Breast epithelium (tissue), 4 donors: ENCODE measurements at regions of chr17 and their contacts with region 1.

Region 1: GRCh38 chr17:48202959-48203358 is 95.4 kb downstream of the SNX11 start:
- DNase-seq: no peak
- H3K4me3 ChIP-seq: no peak overlapping the region
- H3K27ac ChIP-seq: no peak overlapping the region
- H3K4me1 ChIP-seq: no peaks in the 10 kb centered on the region
- H3K27me3 ChIP-seq: no peaks in the 10 kb centered on the region
- CTCF ChIP-seq: no peak
- POLR2A ChIP-seq: no peak

Region 2: GRCh38 chr17:48392857-48393256 is 189.9 kb after region 1 on chr17:
- intact Hi-C with region 1: no loop called
- DNase-seq: no peak
- H3K4me3 ChIP-seq: no peak overlapping the region
- H3K27ac ChIP-seq: no peak overlapping the region
- H3K4me1 ChIP-seq: no peaks in the 10 kb centered on the region
- H3K27me3 ChIP-seq: peaks cover 0 to 16% of the 10 kb centered on the region in 2 donors
- CTCF ChIP-seq: no peak
- POLR2A ChIP-seq: no peak

Region 3: GRCh38 chr17:49016788-49017463 is 814.0 kb after region 1 on chr17:
- intact Hi-C with region 1: no loop called
- DNase-seq: no peak
- H3K4me3 ChIP-seq: no peak overlapping the region
- H3K27ac ChIP-seq: no peak overlapping the region
- H3K4me1 ChIP-seq: peaks cover 0 to 6% of the 10 kb centered on the region in 2 donors
- H3K27me3 ChIP-seq: peaks cover 5 to 60% of the 10 kb centered on the region in 2 donors
- CTCF ChIP-seq: no peak
- POLR2A ChIP-seq: no peak

Region 4: DNA sequence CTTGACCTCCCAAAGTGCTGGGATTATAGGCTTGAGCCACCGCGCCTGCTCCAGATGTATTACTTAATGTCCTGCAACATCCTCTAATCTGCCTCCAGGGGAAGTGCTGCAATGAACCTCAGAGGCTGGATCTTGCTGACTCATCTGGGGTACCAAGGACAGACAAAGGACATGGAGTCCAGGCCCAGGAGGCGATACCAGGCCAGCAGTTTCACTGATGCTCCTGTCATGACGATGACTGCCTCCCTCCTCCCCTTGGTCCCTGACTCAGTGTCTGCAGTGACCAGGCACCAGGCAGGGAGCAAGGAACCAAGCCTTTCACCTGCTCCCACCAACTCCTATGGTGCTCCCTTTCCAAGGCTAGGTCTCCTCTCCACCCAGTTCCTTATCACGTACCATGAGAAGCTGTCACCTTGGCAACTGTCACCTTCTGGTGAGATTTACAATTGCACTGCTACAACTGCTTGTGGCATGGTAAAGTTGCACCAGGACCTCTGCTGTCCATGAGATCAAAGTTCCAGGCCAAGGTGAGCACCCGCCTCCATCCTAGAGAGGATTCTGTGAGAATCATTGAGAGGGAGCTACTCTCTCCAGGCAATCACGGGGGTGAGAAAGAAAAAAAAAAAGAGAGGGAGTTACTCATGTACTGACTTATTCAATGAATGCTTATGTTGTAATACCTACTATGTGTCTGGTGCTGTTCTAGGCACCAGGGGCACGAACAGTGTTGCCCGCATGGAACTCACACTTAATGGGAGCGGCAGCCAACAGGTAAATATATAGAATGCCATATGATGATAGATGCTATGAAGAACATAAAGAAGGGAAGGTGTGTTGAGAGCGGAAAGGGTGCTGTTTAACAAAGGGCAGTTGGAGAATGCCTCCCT is 1049.4 kb after region 1 on chr17:
- intact Hi-C with region 1: loop called (anchors 10 kb)
- DNase-seq: no peak
- H3K4me3 ChIP-seq: no peak overlapping the region
- H3K27ac ChIP-seq: no peak overlapping the region
- H3K4me1 ChIP-seq: no peaks in the 10 kb centered on the region
- H3K27me3 ChIP-seq: peaks cover 0 to 3% of the 10 kb centered on the region in 2 donors
- CTCF ChIP-seq: no peak
- POLR2A ChIP-seq: no peak

Region 5: GRCh38 chr17:49951362-49952090 is 1748.6 kb after region 1 on chr17:
- intact Hi-C with region 1: no loop called
- DNase-seq: no peak
- H3K4me3 ChIP-seq: no peak overlapping the region
- H3K27ac ChIP-seq: no peak overlapping the region
- H3K4me1 ChIP-seq: no peaks in the 10 kb centered on the region
- H3K27me3 ChIP-seq: no peaks in the 10 kb centered on the region
- CTCF ChIP-seq: no peak
- POLR2A ChIP-seq: no peak